HCT116 (cell line): ENCODE measurements at regions of chr7 and their contacts with region 1.

Region 1: DNA sequence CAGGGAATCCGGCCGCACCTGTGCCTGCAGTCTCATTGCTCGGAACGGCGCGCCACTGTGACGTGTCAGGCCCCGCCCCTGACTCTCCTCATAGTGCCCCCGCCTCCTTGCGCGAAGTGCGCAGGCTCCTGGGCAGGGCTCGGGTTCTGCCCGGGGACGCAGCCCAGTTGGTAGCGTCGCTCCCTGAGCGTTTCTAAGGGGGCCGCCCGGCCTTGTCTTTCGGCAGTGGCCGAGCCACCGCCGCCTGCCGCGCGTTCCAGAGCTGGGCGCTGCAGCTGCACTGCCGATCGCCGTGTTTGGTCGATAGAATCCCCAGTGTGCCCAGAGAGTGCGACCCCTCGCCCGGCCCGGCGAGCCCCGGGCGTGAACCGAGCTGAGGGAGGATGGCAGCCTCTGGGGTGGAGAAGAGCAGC is at the start of gene KLHL7:
- DNase-seq: peak; percentile 82
- ATAC-seq: peak; percentile 97
- H3K4me3 ChIP-seq: peak within 1 kb of the TSS; percentile 88 to 96
- H3K27ac ChIP-seq: peak within 1 kb of the TSS; percentile 75
- H3K4me1 ChIP-seq: peaks cover 0 to 7% of the 10 kb centered on the region in 2 experiments; a peak in 3 of 4 replicates
- H3K27me3 ChIP-seq: no peaks in the 10 kb centered on the region
- CTCF ChIP-seq: no peak
- POLR2A ChIP-seq: peak; percentile 85
- RAD21 ChIP-seq: no peak
- total RNA-seq, gene KLHL7: 20.6 TPM

Region 2: GRCh38 chr7:23181684-23182553 is 76.3 kb after region 1 on chr7 and contains the start of gene NUP42:
- CTCF ChIA-PET with region 1: no interaction called
- POLR2A ChIA-PET with region 1: interaction called, 5 read pairs
- RAD21 ChIA-PET with region 1: no interaction called
- intact Hi-C with region 1: loop called (anchors 5 kb)
- DNase-seq: peak; percentile 99
- ATAC-seq: peak; percentile 94
- H3K4me3 ChIP-seq: peak within 1 kb of the TSS; percentile 89 to 92
- H3K27ac ChIP-seq: peak within 1 kb of the TSS; percentile 78
- H3K4me1 ChIP-seq: peaks cover 5 to 14% of the 10 kb centered on the region in 2 experiments; a peak in 3 of 4 replicates
- H3K27me3 ChIP-seq: no peaks in the 10 kb centered on the region
- CTCF ChIP-seq: no peak
- POLR2A ChIP-seq: peak; percentile 76
- RAD21 ChIP-seq: no peak
- total RNA-seq, gene NUP42: 36.5 TPM

Region 3: DNA sequence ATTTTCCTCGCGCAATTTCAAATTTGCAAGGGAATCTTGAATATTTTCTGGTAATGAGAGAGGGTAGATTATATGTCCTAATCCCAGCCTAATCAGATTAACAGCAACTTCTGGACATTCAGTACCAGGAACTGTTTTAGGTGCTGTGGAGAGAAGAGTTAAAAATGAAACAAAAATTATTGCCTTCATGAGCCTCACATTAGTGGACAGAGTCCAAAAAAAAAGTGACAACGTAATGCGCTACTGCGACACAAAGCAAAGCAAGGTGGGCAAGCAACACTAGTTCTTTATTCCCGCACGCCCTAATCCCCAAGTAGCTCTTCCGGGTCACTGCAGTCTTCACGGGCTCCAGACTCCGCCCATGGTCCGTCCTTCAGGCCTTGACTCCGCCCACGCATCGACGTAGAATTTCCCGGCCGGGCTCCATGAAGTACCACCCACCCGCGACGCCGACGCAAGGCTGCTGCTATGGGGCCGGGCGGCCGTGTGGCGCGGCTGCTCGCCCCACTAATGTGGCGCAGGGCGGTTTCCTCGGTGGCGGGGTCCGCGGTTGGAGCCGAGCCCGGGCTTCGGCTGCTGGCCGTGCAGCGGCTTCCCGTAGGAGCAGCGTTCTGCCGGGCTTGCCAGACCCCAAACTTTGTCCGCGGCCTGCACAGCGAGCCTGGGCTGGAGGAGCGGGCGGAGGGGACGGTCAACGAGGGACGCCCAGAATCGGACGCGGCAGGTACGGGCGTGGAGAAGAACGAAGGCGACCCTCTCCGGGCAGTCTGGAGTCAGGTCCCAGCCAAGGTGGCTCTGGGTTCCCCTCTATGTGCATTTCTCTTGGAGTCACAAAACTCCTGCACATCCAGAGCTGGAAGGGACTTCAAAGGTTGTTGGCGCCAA is 193.5 kb after region 1 on chr7 and contains the start of gene MALSU1:
- CTCF ChIA-PET with region 1: no interaction called
- POLR2A ChIA-PET with region 1: no interaction called
- RAD21 ChIA-PET with region 1: no interaction called
- intact Hi-C with region 1: loop called (anchors 5 kb)
- DNase-seq: peak; percentile 95
- ATAC-seq: peak; percentile 95
- H3K4me3 ChIP-seq: peak within 1 kb of the TSS; percentile 96 to 100
- H3K27ac ChIP-seq: peak within 1 kb of the TSS; percentile 81
- H3K4me1 ChIP-seq: peaks cover 16 to 32% of the 10 kb centered on the region in 2 experiments; a peak in 3 of 4 replicates
- H3K27me3 ChIP-seq: no peaks in the 10 kb centered on the region
- CTCF ChIP-seq: no peak
- POLR2A ChIP-seq: peak; percentile 94
- RAD21 ChIP-seq: peak; percentile 11; the same call in 1 of the 2 replicates
- total RNA-seq, gene MALSU1: 105 TPM